Ovary (tissue), 10 donors: ENCODE measurements at regions of chr15 and their contacts with region 1.

Region 1: GRCh38 chr15:64681424-64682024 is 93.9 kb downstream of the RBPMS2 start:
- DNase-seq: peak in 1 of 5 donors; percentile 48
- H3K4me3 ChIP-seq: no peak overlapping the region
- H3K27ac ChIP-seq: no peak overlapping the region
- H3K4me1 ChIP-seq: peaks cover 4% of the 10 kb centered on the region
- H3K27me3 ChIP-seq: no peaks in the 10 kb centered on the region
- CTCF ChIP-seq: peak in 2 of 3 donors; percentile 60 to 65
- EP300 ChIP-seq: no peak
- POLR2A ChIP-seq: no peak

Region 2: GRCh38 chr15:64430000-64430735 is 251.4 kb before region 1 on chr15:
- intact Hi-C with region 1: loop called in 2 of 4 experiments (anchors 5 to 10 kb)
- DNase-seq: peak; percentile 48 to 71 (median 57)
- H3K4me3 ChIP-seq: no peak overlapping the region
- H3K27ac ChIP-seq: peak overlapping the region in 1 of 2 donors; percentile 72
- H3K4me1 ChIP-seq: peaks cover 3% of the 10 kb centered on the region
- H3K27me3 ChIP-seq: no peaks in the 10 kb centered on the region
- CTCF ChIP-seq: no peak
- EP300 ChIP-seq: no peak
- POLR2A ChIP-seq: no peak

Region 3: GRCh38 chr15:64443747-64444621 is 237.5 kb before region 1 on chr15:
- intact Hi-C with region 1: loop called in 1 of 4 experiments (anchors 10 kb)
- DNase-seq: no peak
- H3K4me3 ChIP-seq: no peak overlapping the region
- H3K27ac ChIP-seq: peak overlapping the region in 1 of 2 donors; percentile 13
- H3K4me1 ChIP-seq: no peaks in the 10 kb centered on the region
- H3K27me3 ChIP-seq: no peaks in the 10 kb centered on the region
- CTCF ChIP-seq: no peak
- EP300 ChIP-seq: no peak
- POLR2A ChIP-seq: no peak

Region 4: GRCh38 chr15:64961013-64961412 is 279.5 kb after region 1 on chr15:
- intact Hi-C with region 1: no loop called
- DNase-seq: no peak
- H3K4me3 ChIP-seq: no peak overlapping the region
- H3K27ac ChIP-seq: no peak overlapping the region
- H3K4me1 ChIP-seq: no peaks in the 10 kb centered on the region
- H3K27me3 ChIP-seq: no peaks in the 10 kb centered on the region
- CTCF ChIP-seq: no peak
- EP300 ChIP-seq: no peak
- POLR2A ChIP-seq: no peak